Motor neuron (in vitro differentiated cells): ENCODE measurements at regions of chr19 and their contacts with region 1.

Region 1: GRCh38 chr19:46840136-46840942 is 10.3 kb downstream of the AP2S1 start:
- ATAC-seq: peak; percentile 55 to 86 (median 68)
- H3K4me3 ChIP-seq: no peak overlapping the region
- H3K27ac ChIP-seq: no peak overlapping the region
- H3K4me1 ChIP-seq: no peaks in the 10 kb centered on the region

Region 2: GRCh38 chr19:46600384-46601317 is 239.7 kb before region 1 on chr19:
- in situ Hi-C with region 1: loop called in 1 of 9 experiments (anchors 25 kb)
- ATAC-seq: peak; percentile 84 to 91 (median 88)
- H3K4me3 ChIP-seq: peak overlapping the region; percentile 55 to 99 (median 73)
- H3K27ac ChIP-seq: peak overlapping the region; percentile 100
- H3K4me1 ChIP-seq: peaks cover 18 to 21% of the 10 kb centered on the region in 2 donors

Region 3: GRCh38 chr19:46753420-46754155 is 86.8 kb before region 1 on chr19:
- in situ Hi-C with region 1: loop called in 2 of 9 experiments (anchors 10 kb)
- ATAC-seq: peak in 4 of 8 experiments; percentile 24 to 59 (median 54)
- H3K4me3 ChIP-seq: no peak overlapping the region
- H3K27ac ChIP-seq: no peak overlapping the region
- H3K4me1 ChIP-seq: no peaks in the 10 kb centered on the region